Right ventricle myocardium inferior (tissue), 1 donor: ENCODE measurements at regions of chr16 and their contacts with region 1.

Region 1: DNA sequence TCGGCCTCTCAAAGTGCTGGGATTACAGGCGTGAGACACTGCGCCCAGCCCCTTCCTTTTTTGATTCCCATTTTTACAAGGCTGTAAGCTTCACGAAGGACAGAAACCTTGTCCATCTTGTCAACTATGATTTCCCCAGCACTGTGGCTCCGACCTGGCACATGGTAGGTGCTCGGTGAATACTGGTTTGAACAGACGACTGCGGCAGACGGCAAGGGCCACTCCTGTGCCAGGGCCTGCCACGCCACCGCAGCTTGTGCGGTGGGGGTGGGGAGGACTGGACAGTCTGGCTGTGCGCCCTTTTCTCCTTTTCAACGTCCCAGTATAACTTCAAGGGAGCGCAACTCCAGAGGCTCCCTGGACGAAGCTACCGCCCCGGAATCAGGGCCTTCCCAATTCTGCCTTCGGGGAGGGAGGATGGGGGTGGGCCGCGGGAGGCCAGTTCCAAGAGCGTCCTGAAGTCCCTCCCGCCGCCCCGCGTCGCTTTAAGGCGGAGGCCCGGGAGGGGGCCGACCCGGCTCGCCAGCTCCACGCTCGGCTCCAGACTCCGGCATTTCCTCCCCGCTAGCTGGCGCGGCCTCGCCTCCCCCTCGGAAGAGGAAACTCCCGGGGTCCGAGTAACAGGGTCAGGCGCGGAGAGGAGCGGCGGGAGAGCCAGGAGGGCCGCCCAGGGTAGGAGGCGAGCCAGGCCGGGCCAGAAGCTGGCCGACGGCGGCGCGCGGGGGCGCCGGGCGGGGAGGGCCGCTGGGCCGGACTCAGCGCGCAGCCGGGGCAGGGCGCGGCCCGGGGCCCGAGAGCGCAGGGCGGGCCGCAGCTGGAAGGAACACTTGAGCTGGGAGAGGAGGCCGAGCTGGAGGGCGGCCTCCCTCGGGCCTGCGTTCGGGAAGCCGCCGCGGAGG is at the start of gene ITPRIPL2:
- DNase-seq: peak; percentile 94
- ATAC-seq: peak; percentile 93
- total RNA-seq, gene ITPRIPL2: 15.3 TPM

Region 2: GRCh38 chr16:19130852-19131810 is 17.4 kb after region 1 on chr16:
- intact Hi-C with region 1: loop called (anchors 2 kb)
- DNase-seq: peak; percentile 82
- ATAC-seq: peak; percentile 81

Region 3: DNA sequence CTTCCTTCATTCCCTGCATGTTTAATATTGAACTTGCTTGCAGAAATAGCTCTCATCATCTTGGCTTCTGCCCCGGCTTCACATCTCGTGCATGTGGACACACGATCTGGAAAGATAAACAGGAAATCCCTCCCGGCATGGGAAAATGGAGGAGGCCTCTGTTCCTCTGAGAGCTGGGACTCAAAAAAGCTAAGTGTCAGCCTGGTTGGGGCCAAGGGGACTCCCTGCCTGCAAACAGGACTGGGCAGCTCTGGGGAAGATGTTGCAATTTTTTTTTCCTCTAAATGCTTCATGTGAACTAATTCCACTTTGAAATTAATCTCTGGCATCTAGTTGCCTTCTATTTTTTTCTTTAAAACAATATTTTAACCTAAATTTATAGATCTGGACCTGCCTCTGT is 24.9 kb after region 1 on chr16:
- intact Hi-C with region 1: loop called (anchors 2 kb)
- DNase-seq: no peak
- ATAC-seq: peak; percentile 91